ENCODE measurements at regions of chr12 and their contacts with region 1.

Region 1: GRCh38 chr12:47819896-47820630 is at the start of gene HDAC7:
- DNase-seq: peak; percentile 92 to 93
- ATAC-seq: peak; percentile 51 to 81 (median 72)
- H3K4me3 ChIP-seq: peak within 1 kb of the TSS; percentile 61 to 91 (median 83)
- H3K27ac ChIP-seq: peak within 1 kb of the TSS; percentile 94 to 100 (median 99)
- H3K4me1 ChIP-seq: peaks cover 28 to 90% (median 84%) of the 10 kb centered on the region in 9 donors
- H3K27me3 ChIP-seq: no peaks in the 10 kb centered on the region
- CTCF ChIP-seq: peak in 1 of 9 donors; percentile 9
- total RNA-seq, gene HDAC7: 26.9 to 50.7 (median 38.5) TPM

Region 2: DNA sequence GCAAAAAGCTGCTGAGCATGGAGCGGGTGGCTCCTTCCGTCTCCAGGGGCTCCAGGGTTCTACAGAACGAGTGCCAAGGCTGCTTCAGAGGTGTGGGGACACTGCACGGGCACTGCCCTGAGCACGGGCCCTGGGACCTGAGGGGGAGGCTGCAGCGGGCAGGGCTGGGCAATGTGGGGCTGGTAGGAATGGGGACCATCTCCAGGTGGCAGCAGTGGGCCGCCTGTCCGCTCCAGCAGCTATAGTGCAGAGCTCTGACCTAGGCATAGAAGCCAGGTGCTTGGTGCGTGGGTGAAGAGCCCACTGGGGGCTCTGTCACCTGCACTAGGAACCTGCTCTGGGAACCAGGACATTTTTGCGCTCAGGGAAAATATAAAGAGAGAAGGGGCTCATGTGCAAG is 22.6 kb before region 1 on chr12:
- intact Hi-C with region 1: loop called in 1 of 10 experiments (anchors 1 kb)
- DNase-seq: no peak
- ATAC-seq: peak in 4 of 8 donors; percentile 18 to 31 (median 27)
- H3K4me3 ChIP-seq: no peak overlapping the region
- H3K27ac ChIP-seq: no peak overlapping the region
- H3K4me1 ChIP-seq: peaks cover 35 to 51% (median 42%) of the 10 kb centered on the region in 9 donors
- H3K27me3 ChIP-seq: no peaks in the 10 kb centered on the region
- CTCF ChIP-seq: peak in 7 of 9 donors; percentile 31 to 58 (median 44)